Cardiac septum (tissue), 1 donor: ENCODE measurements at regions of chr9 and their contacts with region 1.

Region 1: GRCh38 chr9:127869310-127870152 is 7.9 kb downstream of the AK1 start:
- DNase-seq: peak; percentile 95

Region 2: DNA sequence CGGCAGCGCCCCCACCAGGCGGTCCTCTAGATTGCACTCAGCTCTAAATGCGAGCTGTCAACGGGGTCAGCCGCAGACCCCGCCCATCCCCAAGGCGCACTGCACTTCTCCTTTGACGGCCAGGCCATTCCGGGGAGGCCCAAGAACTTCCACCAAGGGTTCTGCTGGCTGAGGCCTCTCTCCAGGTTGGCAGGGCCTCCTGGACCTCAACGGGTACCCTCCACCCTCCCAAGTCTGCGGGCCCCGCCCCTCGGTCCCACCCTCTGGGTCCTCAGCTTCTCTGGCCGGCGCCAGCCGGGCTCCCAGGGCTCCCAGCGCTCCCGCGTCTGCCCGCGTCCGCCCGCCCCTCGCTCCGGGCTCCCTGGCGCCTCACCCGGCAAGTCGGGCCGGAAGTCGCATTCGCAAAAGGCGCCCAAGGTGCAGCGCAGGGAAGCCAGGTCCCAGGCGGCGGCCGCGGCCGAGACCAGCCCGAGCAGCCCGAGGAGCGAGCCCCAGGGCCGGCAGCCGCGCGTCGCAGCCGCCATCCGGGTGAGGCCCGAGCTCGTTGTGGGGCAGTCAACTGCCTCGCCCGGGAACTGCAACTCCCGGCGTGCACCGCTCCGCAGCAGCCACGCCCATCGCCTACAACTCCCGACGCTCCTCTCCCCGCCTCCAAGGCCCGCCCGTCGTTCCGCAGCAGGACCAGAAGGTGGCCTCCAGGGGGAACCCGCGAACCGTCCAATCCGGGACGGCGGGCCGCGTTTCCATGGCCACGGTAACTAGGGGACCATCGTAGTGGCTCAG is 134.6 kb before region 1 on chr9 and contains the start of gene TOR2A:
- intact Hi-C with region 1: loop called (anchors 5 kb)
- DNase-seq: peak; percentile 98
- total RNA-seq, gene TOR2A: 4.4 TPM